GM10248 (cell line): ENCODE measurements at regions of chr10 and their contacts with region 1.

Region 1: DNA sequence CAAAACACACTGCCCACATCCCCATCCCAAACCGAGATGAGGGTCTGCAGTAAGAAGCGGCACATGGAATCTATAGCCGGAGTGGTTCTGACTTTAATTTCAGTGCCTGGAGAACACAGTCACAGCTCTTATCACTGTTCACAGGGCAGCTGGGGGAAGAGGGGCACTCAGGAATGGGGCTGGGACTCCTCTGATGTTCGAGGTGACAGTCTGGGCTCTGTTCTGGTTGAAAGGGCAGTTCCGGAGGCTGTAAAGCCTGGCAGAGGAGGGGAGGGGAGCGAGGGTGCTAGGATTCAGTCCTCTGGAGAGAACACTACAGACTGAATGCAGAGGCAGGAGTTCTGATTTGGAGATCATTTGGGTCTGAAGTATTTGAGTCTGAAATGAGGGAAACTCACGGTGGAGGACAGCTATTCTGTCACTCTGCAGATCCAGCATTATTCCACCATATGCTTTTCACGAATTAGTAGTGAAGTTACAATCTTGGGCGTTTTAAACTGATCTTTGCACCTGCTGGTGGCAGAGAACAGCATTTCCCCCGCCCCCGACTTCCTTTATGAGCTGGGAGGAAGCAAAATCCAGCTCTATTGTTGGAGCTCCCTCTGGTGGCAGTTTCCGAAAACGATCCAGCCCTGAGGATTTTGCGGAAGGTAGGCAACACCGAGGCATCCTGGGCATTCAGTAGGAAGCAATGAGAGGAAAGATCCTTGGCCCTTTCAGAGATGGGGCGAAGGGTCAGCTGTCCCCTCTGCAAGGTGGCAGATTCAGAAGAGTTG is 22.7 kb upstream of the KCNK18 start:
- DNase-seq: peak; percentile 84
- CTCF ChIP-seq: peak; percentile 72

Region 2: GRCh38 chr10:116683166-116683565 is 491.5 kb before region 1 on chr10:
- CTCF ChIA-PET with region 1: interaction called, 13 read pairs
- POLR2A ChIA-PET with region 1: no interaction called
- DNase-seq: no peak
- CTCF ChIP-seq: no peak

Region 3: GRCh38 chr10:116787893-116788665 is 386.5 kb before region 1 on chr10:
- CTCF ChIA-PET with region 1: interaction called, 130 read pairs
- POLR2A ChIA-PET with region 1: no interaction called
- DNase-seq: peak; percentile 69
- CTCF ChIP-seq: peak; percentile 96

Region 4: DNA sequence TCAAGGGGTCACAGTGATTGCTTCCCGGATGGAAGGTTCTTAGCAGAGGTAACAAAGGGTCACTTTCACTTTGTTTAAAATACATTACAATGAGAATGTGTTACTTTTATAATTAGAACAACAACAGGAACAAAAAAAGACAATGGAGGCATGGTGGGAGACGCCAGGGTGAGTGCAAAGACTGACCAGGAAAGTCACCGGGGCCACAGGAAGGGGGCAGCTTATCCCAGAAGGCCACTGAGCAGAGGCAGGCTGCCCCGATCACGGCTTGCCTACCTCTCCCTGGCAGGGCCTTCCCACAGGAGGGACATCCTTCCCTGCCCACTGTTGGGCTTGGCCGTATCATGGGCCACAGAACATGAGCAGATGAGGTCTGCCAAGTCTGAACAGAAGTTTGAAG is 372.2 kb before region 1 on chr10:
- CTCF ChIA-PET with region 1: interaction called, 183 read pairs
- POLR2A ChIA-PET with region 1: no interaction called
- DNase-seq: no peak
- CTCF ChIP-seq: no peak

Region 5: GRCh38 chr10:116815641-116816601 is 358.7 kb before region 1 on chr10:
- CTCF ChIA-PET with region 1: interaction called, 19 read pairs
- POLR2A ChIA-PET with region 1: no interaction called
- DNase-seq: no peak
- CTCF ChIP-seq: no peak

Region 6: GRCh38 chr10:117159390-117159789 is 15.2 kb before region 1 on chr10:
- CTCF ChIA-PET with region 1: interaction called, 23 read pairs
- POLR2A ChIA-PET with region 1: no interaction called
- DNase-seq: no peak
- CTCF ChIP-seq: no peak

Region 7: DNA sequence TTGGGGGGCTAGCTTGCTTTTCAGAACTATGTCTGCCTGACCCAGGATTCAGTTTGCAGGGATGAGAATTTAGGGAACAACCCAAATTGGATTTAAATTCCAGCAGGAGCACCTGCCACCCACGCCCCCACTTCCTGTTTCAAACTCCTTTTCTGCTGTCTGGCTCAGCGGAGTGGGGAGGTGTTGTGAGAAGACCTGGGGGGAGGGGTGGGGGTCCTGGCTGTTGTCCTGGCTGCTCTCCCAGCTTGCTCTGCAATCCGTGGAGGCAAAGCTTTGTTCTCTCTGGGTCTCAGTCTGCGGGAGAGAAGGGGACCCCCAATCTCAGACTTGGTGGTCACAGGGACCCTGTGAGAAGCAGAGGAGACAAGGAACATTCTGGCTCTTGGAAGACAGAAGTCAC is 23.5 kb after region 1 on chr10:
- CTCF ChIA-PET with region 1: interaction called, 14 read pairs
- POLR2A ChIA-PET with region 1: no interaction called
- DNase-seq: no peak
- CTCF ChIP-seq: no peak